Natural killer cell (primary cell): ENCODE measurements at regions of chr16 and their contacts with region 1.

Region 1: GRCh38 chr16:48353565-48354163 is 31.5 kb downstream of the SIAH1 start:
- DNase-seq: peak; percentile 51 to 89
- ATAC-seq: peak; percentile 95 to 99 (median 96)
- H3K4me3 ChIP-seq: no peak overlapping the region
- H3K4me3 Mint-ChIP-seq: no peak overlapping the region
- H3K27ac ChIP-seq: no peak overlapping the region
- H3K27ac Mint-ChIP-seq: peak overlapping the region; percentile 34 to 57
- H3K4me1 ChIP-seq: no peaks in the 10 kb centered on the region
- H3K4me1 Mint-ChIP-seq: peaks cover 6 to 15% of the 10 kb centered on the region in 2 donors
- H3K27me3 ChIP-seq: no peaks in the 10 kb centered on the region
- H3K27me3 Mint-ChIP-seq: no peaks in the 10 kb centered on the region
- CTCF ChIP-seq: peak; percentile 87

Region 2: DNA sequence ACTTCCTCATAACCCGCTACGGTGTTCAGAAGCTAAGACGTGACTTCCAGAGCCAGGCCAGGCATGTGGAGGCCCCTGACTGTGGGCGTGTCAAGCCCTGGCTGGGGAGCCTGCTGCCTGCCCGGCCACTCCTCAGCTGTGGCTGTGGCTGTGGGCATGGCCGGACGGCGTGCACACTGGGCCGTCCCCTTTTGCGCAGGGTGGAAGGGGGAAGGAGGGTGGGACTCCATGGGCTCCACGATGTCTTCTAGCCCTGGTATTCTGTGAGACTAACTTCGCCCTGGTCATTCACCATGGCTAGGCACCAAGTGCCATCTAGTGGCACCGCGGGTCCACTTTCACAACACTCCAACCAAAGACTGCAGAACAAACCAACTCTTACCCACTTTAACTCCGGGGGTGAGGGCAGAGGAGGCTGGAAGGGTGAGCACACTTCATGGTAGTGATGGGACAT is 188.4 kb after region 1 on chr16:
- intact Hi-C with region 1: loop called (anchors 1 kb)
- DNase-seq: peak; percentile 43 to 45
- ATAC-seq: peak; percentile 66 to 85 (median 79)
- H3K4me3 ChIP-seq: no peak overlapping the region
- H3K4me3 Mint-ChIP-seq: no peak overlapping the region
- H3K27ac ChIP-seq: no peak overlapping the region
- H3K27ac Mint-ChIP-seq: peak overlapping the region; percentile 43 to 72
- H3K4me1 ChIP-seq: peaks cover 7% of the 10 kb centered on the region
- H3K4me1 Mint-ChIP-seq: peaks cover 15 to 27% of the 10 kb centered on the region in 2 donors
- H3K27me3 ChIP-seq: no peaks in the 10 kb centered on the region
- H3K27me3 Mint-ChIP-seq: no peaks in the 10 kb centered on the region
- CTCF ChIP-seq: peak; percentile 65

Region 3: DNA sequence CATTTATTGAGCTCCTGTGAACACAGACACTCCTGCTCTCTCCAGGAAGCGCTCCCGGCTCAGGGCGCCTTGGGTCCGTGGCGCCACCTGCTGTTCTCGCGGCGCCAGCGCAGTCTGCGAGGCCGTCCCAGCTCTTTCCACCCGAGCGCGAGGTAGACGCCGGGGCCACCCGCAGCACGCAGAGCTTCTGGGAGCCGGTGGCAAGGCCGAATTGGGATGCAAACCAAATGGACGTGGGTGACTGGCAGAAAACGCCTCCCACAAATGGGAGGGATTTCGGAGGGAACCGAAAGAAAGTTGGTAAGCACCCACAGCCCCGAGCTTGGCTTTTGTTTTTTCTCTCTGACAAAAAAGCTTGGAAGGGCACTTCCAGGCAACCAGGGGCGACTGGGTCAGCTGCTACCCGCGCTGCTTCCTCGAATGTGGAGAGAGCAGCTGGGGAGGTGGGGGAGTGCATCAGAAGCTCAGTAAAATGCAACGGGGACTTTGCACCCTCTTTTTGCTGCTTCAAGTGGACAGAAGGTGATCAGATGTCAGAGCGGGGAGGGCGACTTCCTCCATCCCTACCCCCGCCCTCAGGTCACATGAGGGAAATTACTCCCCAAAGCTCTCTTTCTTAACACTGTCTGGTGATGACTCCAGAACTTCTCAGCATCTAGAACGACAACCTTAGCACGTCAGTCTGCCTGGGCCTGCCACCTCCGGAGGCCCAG is 269.8 kb after region 1 on chr16:
- intact Hi-C with region 1: loop called (anchors 1 kb)
- DNase-seq: peak; percentile 80 to 91
- ATAC-seq: peak; percentile 95 to 97 (median 96)
- H3K4me3 ChIP-seq: peak overlapping the region; percentile 41
- H3K4me3 Mint-ChIP-seq: peak overlapping the region; percentile 83
- H3K27ac ChIP-seq: peak overlapping the region; percentile 28
- H3K27ac Mint-ChIP-seq: peak overlapping the region in 1 of 2 donors; percentile 82
- H3K4me1 ChIP-seq: peaks cover 22% of the 10 kb centered on the region
- H3K4me1 Mint-ChIP-seq: peaks cover 15 to 18% of the 10 kb centered on the region in 2 donors
- H3K27me3 ChIP-seq: no peaks in the 10 kb centered on the region
- H3K27me3 Mint-ChIP-seq: no peaks in the 10 kb centered on the region
- CTCF ChIP-seq: peak; percentile 99

Region 4: GRCh38 chr16:48632137-48632774 is 278.6 kb after region 1 on chr16:
- intact Hi-C with region 1: loop called (anchors 1 kb)
- DNase-seq: no peak
- ATAC-seq: no peak
- H3K4me3 ChIP-seq: no peak overlapping the region
- H3K4me3 Mint-ChIP-seq: no peak overlapping the region
- H3K27ac ChIP-seq: no peak overlapping the region
- H3K27ac Mint-ChIP-seq: no peak overlapping the region
- H3K4me1 ChIP-seq: peaks cover 4% of the 10 kb centered on the region
- H3K4me1 Mint-ChIP-seq: peaks cover 7% of the 10 kb centered on the region in 2 donors
- H3K27me3 ChIP-seq: no peaks in the 10 kb centered on the region
- H3K27me3 Mint-ChIP-seq: peaks cover 7 to 10% of the 10 kb centered on the region in 2 donors
- CTCF ChIP-seq: no peak